Tibial artery (tissue), 4 donors: ENCODE measurements at regions of chr9 and their contacts with region 1.

Region 1: DNA sequence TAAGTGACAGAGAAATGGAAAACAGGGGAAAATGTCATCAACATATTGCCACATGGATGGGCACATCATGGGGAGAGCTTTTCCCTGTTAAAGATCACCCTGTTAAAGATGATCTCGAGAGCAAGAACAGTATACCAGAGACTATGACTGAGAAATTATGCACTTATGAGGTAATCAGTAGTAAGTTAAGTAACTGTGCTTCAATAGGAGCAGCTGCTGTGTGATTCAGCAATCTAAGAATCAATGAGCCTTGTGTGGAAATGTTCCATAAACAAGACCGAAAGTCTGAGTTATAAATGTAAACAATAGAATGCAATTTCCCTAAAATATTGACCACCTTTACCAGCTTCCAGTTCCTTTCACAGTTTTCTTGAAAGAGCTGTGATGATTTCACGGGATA is 582.3 kb downstream of the CAAP1 start:
- DNase-seq: no peak
- H3K4me3 ChIP-seq: no peak overlapping the region
- H3K27ac ChIP-seq: no peak overlapping the region
- H3K4me1 ChIP-seq: no peaks in the 10 kb centered on the region
- H3K27me3 ChIP-seq: no peaks in the 10 kb centered on the region
- CTCF ChIP-seq: no peak

Region 2: GRCh38 chr9:24708814-24709213 is 1601.5 kb before region 1 on chr9:
- intact Hi-C with region 1: loop called (anchors 10 kb)
- DNase-seq: no peak
- H3K4me3 ChIP-seq: no peak overlapping the region
- H3K27ac ChIP-seq: no peak overlapping the region
- H3K4me1 ChIP-seq: no peaks in the 10 kb centered on the region
- H3K27me3 ChIP-seq: no peaks in the 10 kb centered on the region
- CTCF ChIP-seq: no peak

Region 3: GRCh38 chr9:26375448-26375847 is 65.2 kb after region 1 on chr9:
- intact Hi-C with region 1: loop called (anchors 10 kb)
- DNase-seq: no peak
- H3K4me3 ChIP-seq: no peak overlapping the region
- H3K27ac ChIP-seq: no peak overlapping the region
- H3K4me1 ChIP-seq: no peaks in the 10 kb centered on the region
- H3K27me3 ChIP-seq: no peaks in the 10 kb centered on the region
- CTCF ChIP-seq: no peak